PC-9 (cell line): ENCODE measurements at regions of chr2 and their contacts with region 1.

Region 1: DNA sequence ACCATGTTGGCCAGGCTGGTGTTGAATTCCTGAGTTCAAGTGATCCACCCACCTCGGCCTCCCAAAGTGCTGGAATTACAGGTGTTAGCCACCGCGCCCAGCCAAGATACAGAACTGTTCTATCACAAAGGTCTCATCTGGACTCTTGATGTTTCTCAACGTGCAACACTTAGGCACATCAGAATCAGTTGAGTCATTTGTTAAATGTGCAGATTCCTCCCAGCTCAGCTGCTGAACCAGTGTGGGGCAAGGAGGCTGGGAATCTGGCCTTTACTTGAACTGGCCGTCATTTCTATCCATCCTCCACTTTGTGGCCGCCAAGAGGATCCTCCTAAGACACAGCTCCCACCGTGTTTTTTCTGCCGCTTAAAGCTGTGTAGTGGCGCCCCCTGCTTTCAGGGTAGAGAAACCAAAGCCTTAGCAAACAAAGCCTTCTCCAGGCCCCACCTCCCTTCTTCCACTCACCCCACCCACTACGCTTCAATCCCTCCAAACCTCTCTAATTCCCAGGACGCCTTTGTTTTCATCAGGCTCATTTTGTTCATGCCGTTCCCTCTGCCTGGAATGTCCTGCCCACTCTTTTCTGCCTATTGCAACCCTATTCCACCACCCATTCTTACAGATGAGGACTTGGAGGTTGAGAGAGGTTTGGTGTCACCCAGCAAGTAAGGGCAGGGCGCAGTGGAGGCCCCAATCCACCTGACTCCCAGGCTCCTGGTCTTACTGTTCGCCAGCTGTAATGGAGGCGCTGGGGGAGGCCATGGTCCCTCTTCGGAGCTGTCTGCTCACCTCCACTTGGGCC is 776 bp upstream of the SPEG start:
- DNase-seq: no peak
- H3K4me3 ChIP-seq: no peak overlapping the region
- H3K27ac ChIP-seq: no peak overlapping the region
- H3K4me1 ChIP-seq: no peaks in the 10 kb centered on the region
- H3K27me3 ChIP-seq: no peaks in the 10 kb centered on the region
- CTCF ChIP-seq: peak; percentile 55; the same call in 1 of the 2 replicates

Region 2: GRCh38 chr2:219253753-219254590 is 179.9 kb before region 1 on chr2 and contains the start of gene TUBA4A:
- CTCF ChIA-PET with region 1: no interaction called
- POLR2A ChIA-PET with region 1: no interaction called
- intact Hi-C with region 1: no loop called
- DNase-seq: peak; percentile 65 to 87
- H3K4me3 ChIP-seq: peak within 1 kb of the TSS; percentile 87
- H3K27ac ChIP-seq: peak within 1 kb of the TSS; percentile 43
- H3K4me1 ChIP-seq: peaks cover 46% of the 10 kb centered on the region
- H3K27me3 ChIP-seq: no peaks in the 10 kb centered on the region
- CTCF ChIP-seq: no peak
- total RNA-seq, gene TUBA4A: 118 and 157 TPM in 2 replicates

Region 3: DNA sequence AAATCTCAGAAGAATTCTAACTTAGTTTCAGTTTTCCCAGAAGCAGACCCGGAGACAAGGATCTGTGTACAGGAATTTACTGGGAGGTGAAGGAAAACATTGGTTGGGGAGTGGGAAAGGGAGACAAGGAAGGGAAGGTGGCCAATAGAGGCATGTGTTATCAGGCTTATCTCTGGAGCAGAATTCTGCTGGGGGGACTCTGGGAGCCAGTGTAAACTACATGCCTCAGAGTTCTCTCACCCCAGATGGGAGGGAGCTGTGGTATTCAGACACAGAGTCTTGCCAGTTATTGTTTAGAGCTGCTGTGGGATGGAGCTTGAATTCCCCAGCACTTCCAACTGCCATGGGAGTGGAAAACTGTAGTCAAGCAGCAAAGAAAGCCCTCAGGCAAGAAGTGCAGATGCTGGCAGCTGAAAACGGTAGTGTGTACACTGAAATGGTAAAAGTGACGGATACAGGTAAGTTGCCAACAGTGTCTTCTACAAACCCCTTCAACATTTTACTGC is 65.1 kb before region 1 on chr2:
- CTCF ChIA-PET with region 1: interaction called, 17 read pairs
- POLR2A ChIA-PET with region 1: no interaction called
- intact Hi-C with region 1: no loop called
- DNase-seq: peak; percentile 46 to 65
- H3K4me3 ChIP-seq: no peak overlapping the region
- H3K27ac ChIP-seq: no peak overlapping the region
- H3K4me1 ChIP-seq: peaks cover 4% of the 10 kb centered on the region
- H3K27me3 ChIP-seq: no peaks in the 10 kb centered on the region
- CTCF ChIP-seq: no peak